KBM-7 (cell line): ENCODE measurements at regions of chr1 and their contacts with region 1.

Region 1: GRCh38 chr1:100866041-100866900 is 28.4 kb downstream of the EXTL2 start:
- DNase-seq: peak; percentile 29

Region 2: DNA sequence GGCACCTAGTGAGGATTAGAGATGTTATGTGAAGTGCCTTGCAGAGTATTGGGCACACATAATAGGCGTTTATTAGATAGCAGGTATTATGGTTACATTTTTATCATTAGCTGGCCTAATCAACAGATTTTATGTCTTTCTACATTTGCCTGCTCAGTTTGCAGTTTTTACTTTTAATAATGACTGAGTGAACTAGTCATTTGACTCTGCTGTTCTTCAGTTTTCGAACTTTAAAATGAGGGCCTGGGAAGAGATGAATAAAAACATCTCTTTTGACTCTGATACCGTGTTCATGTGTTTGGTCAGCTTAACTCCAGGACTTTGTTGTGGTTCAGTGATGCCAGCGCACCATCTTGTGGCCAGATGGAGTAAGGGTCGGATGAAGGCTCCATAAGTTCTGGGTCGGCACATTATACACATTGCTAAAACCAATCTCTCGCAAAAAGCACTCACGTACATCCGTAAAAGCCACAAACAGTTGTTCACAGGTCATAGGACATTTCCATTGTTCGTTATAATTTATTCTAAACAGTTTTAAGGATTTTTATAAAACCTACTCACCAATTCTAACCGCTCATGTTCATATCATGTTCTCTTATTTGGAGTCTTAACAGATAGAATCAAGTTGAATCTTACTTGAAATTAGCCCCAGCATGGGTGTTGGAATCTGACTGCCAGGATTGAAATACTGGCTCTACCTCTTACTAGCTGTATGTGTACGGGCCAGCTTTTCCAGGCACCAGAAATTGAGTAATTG is 406.7 kb before region 1 on chr1:
- in situ Hi-C with region 1: loop called (anchors 25 kb)
- DNase-seq: peak; percentile 80

Region 3: GRCh38 chr1:100606438-100606837 is 259.8 kb before region 1 on chr1:
- in situ Hi-C with region 1: loop called (anchors 25 kb)
- DNase-seq: peak; percentile 8

Region 4: DNA sequence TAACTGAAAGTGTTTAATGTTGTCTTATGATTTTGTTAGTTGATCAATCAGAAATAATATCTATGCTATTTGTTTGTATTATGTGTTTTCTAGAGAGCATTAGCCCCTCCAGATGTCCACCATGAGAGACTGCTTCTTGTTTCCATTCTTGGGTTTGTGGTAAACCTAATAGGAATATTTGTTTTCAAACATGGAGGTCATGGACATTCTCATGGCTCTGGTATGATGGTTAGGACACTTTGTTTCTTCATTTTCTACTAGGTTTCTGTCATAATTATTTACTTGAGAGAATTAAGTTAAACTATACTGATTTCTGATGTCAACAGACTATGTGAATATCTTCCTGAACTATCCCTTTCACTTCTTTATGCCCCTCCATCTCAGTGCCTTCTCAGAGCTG is 45.7 kb after region 1 on chr1:
- in situ Hi-C with region 1: no loop called
- DNase-seq: no peak